IMR-90 (cell line): ENCODE measurements at regions of chr12 and their contacts with region 1.

Region 1: GRCh38 chr12:107607464-107608392 is 77.9 kb upstream of the PWP1 start:
- DNase-seq: peak; percentile 70
- ATAC-seq: peak; percentile 79
- H3K4me3 ChIP-seq: no peak overlapping the region
- H3K27ac ChIP-seq: no peak overlapping the region
- H3K4me1 ChIP-seq: no peaks in the 10 kb centered on the region; the same call in 1 of the 2 replicates
- H3K27me3 ChIP-seq: no peaks in the 10 kb centered on the region
- CTCF ChIP-seq: peak; percentile 93
- POLR2A ChIP-seq: no peak
- RAD21 ChIP-seq: peak; percentile 96

Region 2: DNA sequence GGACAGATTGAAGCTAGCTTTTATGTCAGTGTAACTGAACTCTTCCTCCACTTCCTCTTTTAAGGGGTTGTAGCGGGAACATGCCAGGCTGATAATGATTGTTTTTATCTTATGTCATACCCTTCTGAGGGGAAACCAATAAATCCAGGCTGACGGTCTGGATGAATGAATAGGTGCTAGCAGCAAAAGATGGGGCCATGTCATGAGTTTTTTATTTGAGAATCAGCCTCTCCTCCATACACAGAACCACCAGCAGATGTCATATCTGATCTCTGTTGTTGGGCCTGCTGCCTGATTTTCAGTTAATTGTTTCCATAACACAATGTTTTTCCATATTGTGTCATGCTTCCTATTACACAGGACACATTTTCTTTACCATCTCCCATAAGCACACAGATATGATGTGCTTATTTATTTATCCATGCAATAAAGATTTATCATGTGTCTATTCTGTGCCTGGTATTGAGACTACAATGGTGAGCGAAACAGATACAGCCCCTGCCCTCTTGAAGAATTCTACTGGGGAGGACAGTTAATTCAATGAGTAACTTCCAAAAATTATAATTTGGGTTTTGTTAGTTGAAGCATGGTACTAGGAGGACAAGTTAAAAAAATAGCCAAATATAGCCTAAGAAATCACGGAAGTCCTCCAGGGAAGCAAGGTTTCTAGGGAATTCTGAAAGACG is 480.8 kb before region 1 on chr12:
- CTCF ChIA-PET with region 1: interaction called, 85 read pairs
- POLR2A ChIA-PET with region 1: no interaction called
- dilution Hi-C with region 1: no loop called
- in situ Hi-C with region 1: no loop called
- intact Hi-C with region 1: loop called (anchors 1 kb)
- DNase-seq: peak; percentile 24
- ATAC-seq: peak; percentile 48; the same call in 1 of the 2 replicates
- H3K4me3 ChIP-seq: no peak overlapping the region
- H3K27ac ChIP-seq: no peak overlapping the region
- H3K4me1 ChIP-seq: no peaks in the 10 kb centered on the region
- H3K27me3 ChIP-seq: peaks cover 11% of the 10 kb centered on the region
- CTCF ChIP-seq: peak; percentile 46
- POLR2A ChIP-seq: no peak
- RAD21 ChIP-seq: peak; percentile 56

Region 3: GRCh38 chr12:107317751-107318613 is 289.7 kb before region 1 on chr12:
- CTCF ChIA-PET with region 1: no interaction called
- POLR2A ChIA-PET with region 1: no interaction called
- dilution Hi-C with region 1: no loop called
- in situ Hi-C with region 1: loop called (anchors 10 kb)
- intact Hi-C with region 1: loop called (anchors 1 kb)
- DNase-seq: peak; percentile 88
- ATAC-seq: peak; percentile 94
- H3K4me3 ChIP-seq: peak overlapping the region; percentile 48
- H3K27ac ChIP-seq: no peak overlapping the region; the same call in 1 of the 2 replicates
- H3K4me1 ChIP-seq: no peaks in the 10 kb centered on the region; the same call in 1 of the 2 replicates
- H3K27me3 ChIP-seq: peaks cover 19% of the 10 kb centered on the region
- CTCF ChIP-seq: no peak
- POLR2A ChIP-seq: no peak
- RAD21 ChIP-seq: 0 out of 2 replicates have a peak, but pooled peaks have one; percentile 6

Region 4: DNA sequence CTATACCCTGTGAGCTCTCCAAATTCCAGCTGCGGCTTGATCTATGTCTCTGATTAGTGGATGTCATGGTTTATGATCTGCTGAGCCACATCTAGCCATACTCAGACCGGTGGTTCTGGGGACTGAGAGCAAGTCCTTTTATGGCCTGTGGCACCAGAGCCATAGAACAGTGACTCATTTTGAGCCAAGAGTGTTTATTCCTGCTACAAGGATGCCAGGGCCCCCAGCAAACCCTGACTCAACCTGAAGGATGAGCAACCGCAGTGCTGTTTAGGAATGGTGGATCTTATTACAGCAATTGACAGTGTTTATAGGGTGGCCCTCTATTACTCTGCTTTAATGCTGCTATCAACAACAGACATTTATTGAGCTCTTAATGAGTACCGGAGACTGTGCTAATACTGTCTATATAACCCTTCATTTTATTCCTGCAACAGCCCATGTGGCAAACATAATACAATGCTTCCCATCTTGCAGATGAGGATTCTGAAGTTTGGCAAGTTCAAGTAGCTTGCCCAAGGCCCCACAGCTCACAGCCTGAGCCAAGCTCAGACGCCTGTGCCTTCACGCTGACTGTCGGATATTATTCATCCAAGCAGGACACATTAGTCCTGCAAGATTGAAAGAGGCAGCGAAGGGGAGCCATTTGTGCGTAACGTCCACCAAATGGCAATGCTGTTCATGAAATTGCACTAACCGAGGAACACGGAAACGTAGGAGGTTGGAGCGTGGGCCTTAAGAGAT is 195.8 kb before region 1 on chr12:
- CTCF ChIA-PET with region 1: interaction called, 6 read pairs
- POLR2A ChIA-PET with region 1: no interaction called
- dilution Hi-C with region 1: no loop called
- in situ Hi-C with region 1: loop called (anchors 10 kb)
- intact Hi-C with region 1: no loop called
- DNase-seq: peak; percentile 91
- ATAC-seq: peak; percentile 95
- H3K4me3 ChIP-seq: no peak overlapping the region
- H3K27ac ChIP-seq: peak overlapping the region; percentile 67
- H3K4me1 ChIP-seq: peaks cover 15% of the 10 kb centered on the region
- H3K27me3 ChIP-seq: no peaks in the 10 kb centered on the region
- CTCF ChIP-seq: no peak
- POLR2A ChIP-seq: no peak
- RAD21 ChIP-seq: no peak

Region 5: DNA sequence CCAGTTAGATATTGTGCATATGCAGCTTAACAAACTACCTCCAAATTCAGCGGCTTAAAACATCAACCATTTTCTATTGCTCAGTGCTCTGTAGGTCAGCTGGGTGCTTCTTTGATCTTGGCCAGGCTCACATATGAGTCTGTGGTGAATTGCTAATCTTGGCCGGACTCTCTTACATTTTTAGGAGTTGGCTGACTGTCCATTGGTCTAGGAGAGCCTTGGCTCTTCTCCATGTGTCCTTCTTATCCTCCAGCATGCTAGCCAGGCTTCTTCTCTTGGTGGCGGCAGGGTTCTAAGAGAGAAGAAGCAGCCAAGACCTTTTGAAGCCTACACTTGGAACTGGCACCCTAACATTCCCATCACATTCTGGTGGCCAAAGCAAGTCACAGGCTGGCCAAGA is 96.4 kb before region 1 on chr12:
- CTCF ChIA-PET with region 1: no interaction called
- POLR2A ChIA-PET with region 1: no interaction called
- dilution Hi-C with region 1: no loop called
- in situ Hi-C with region 1: no loop called
- intact Hi-C with region 1: no loop called
- DNase-seq: peak; percentile 38
- ATAC-seq: no peak
- H3K4me3 ChIP-seq: no peak overlapping the region
- H3K27ac ChIP-seq: no peak overlapping the region
- H3K4me1 ChIP-seq: peaks cover 4% of the 10 kb centered on the region; the same call in 1 of the 2 replicates
- H3K27me3 ChIP-seq: peaks cover 4% of the 10 kb centered on the region; the same call in 1 of the 2 replicates
- CTCF ChIP-seq: no peak
- POLR2A ChIP-seq: no peak
- RAD21 ChIP-seq: no peak